Caco-2 (cell line): ENCODE measurements at regions of chr2 and their contacts with region 1.

Region 1: DNA sequence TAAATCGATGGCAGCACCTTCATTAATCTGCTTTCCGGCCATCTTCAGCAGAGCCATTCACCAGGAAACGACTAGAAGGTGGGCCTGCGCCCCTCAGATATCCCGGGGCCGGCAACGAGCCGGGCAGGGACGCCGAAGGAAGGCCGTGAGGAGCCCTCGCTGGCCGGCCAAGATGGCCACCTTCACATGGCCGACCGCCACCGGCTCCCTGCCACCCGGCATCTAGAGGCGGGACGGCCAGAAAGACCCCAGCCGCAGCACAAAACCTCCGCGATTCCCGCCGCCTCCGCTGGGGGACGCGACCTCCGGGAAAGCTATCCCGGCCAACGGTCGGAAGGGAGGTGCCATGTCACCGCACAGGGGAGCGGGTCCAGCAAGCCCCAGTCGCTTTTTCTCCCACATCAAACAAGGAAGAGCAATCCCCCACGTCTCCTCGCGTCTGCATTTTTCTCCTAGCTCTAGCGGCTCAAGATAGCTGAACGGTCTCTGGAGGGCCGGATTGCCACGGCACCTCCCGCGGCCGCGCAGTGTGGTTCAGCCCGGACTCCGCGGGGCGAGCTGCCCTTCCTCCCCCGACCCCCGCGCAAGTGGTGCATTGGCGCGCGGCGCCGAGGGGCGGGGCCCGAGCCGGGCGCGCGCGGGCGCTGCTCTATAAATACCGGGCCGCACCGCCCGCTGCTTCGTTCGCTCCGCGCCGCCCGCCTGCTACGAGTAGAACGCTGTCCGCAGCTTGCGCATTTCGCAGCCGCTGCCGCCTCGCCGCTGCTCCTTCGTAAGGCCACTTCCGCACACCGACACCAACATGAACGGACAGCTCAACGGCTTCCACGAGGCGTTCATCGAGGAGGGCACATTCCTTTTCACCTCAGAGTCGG is at the start of gene MAT2A:
- DNase-seq: peak; percentile 97 to 99
- H3K4me3 ChIP-seq: peak within 1 kb of the TSS; percentile 98
- H3K4me3 Mint-ChIP-seq: peak within 1 kb of the TSS; percentile 97
- H3K27ac Mint-ChIP-seq: peak within 1 kb of the TSS; percentile 99
- H3K4me1 ChIP-seq: peaks cover 6% of the 10 kb centered on the region
- H3K4me1 Mint-ChIP-seq: peaks cover 34% of the 10 kb centered on the region
- H3K27me3 ChIP-seq: no peaks in the 10 kb centered on the region
- H3K27me3 Mint-ChIP-seq: no peaks in the 10 kb centered on the region
- CTCF ChIP-seq: peak; percentile 81 to 85
- total RNA-seq, gene MAT2A: 217 and 250 TPM in 2 replicates

Region 2: DNA sequence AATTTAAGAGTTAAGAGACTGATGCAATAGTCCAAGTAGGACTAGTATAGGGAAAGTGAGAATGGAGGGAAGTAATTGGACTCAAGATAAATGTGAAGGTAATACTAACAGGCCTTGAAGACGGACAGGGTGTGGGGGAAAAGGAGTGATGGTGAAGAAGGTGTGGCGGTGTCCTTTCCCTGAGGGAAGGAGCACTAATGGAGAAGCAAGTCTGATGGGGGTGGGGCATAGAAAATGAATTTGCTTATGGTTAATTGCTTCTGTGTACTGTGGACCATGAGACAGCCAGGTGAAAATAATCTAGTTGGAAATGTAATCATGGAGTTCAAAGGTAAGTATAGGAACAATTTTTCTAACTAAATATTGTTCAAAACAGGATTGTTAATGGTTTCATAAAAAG is 203.8 kb before region 1 on chr2:
- CTCF ChIA-PET with region 1: no interaction called
- POLR2A ChIA-PET with region 1: no interaction called
- intact Hi-C with region 1: no loop called
- DNase-seq: no peak
- H3K4me3 ChIP-seq: no peak overlapping the region
- H3K4me3 Mint-ChIP-seq: no peak overlapping the region
- H3K27ac Mint-ChIP-seq: no peak overlapping the region
- H3K4me1 ChIP-seq: no peaks in the 10 kb centered on the region
- H3K4me1 Mint-ChIP-seq: peaks cover 7% of the 10 kb centered on the region
- H3K27me3 ChIP-seq: no peaks in the 10 kb centered on the region
- H3K27me3 Mint-ChIP-seq: no peaks in the 10 kb centered on the region
- CTCF ChIP-seq: no peak

Region 3: GRCh38 chr2:85354286-85355072 is 184.2 kb before region 1 on chr2 and contains the starts of genes ELMOD3 and RETSAT:
- CTCF ChIA-PET with region 1: interaction called, 3 read pairs
- POLR2A ChIA-PET with region 1: interaction called, 11 read pairs
- intact Hi-C with region 1: loop called (anchors 1 kb)
- DNase-seq: peak; percentile 99 to 100
- H3K4me3 ChIP-seq: peak within 1 kb of the TSS; percentile 49
- H3K4me3 Mint-ChIP-seq: peak within 1 kb of the TSS; percentile 99
- H3K27ac Mint-ChIP-seq: peak within 1 kb of the TSS; percentile 96
- H3K4me1 ChIP-seq: no peaks in the 10 kb centered on the region
- H3K4me1 Mint-ChIP-seq: no peaks in the 10 kb centered on the region
- H3K27me3 ChIP-seq: no peaks in the 10 kb centered on the region
- H3K27me3 Mint-ChIP-seq: no peaks in the 10 kb centered on the region
- CTCF ChIP-seq: no peak
- total RNA-seq, gene ELMOD3: 10.3 and 11.3 TPM in 2 replicates
- total RNA-seq, gene RETSAT: 31.1 and 32.3 TPM in 2 replicates

Region 4: GRCh38 chr2:85485815-85486214 is 52.9 kb before region 1 on chr2:
- CTCF ChIA-PET with region 1: no interaction called
- POLR2A ChIA-PET with region 1: no interaction called
- intact Hi-C with region 1: no loop called
- DNase-seq: no peak
- H3K4me3 ChIP-seq: no peak overlapping the region
- H3K4me3 Mint-ChIP-seq: no peak overlapping the region
- H3K27ac Mint-ChIP-seq: no peak overlapping the region
- H3K4me1 ChIP-seq: no peaks in the 10 kb centered on the region
- H3K4me1 Mint-ChIP-seq: no peaks in the 10 kb centered on the region
- H3K27me3 ChIP-seq: no peaks in the 10 kb centered on the region
- H3K27me3 Mint-ChIP-seq: no peaks in the 10 kb centered on the region
- CTCF ChIP-seq: no peak

Region 5: DNA sequence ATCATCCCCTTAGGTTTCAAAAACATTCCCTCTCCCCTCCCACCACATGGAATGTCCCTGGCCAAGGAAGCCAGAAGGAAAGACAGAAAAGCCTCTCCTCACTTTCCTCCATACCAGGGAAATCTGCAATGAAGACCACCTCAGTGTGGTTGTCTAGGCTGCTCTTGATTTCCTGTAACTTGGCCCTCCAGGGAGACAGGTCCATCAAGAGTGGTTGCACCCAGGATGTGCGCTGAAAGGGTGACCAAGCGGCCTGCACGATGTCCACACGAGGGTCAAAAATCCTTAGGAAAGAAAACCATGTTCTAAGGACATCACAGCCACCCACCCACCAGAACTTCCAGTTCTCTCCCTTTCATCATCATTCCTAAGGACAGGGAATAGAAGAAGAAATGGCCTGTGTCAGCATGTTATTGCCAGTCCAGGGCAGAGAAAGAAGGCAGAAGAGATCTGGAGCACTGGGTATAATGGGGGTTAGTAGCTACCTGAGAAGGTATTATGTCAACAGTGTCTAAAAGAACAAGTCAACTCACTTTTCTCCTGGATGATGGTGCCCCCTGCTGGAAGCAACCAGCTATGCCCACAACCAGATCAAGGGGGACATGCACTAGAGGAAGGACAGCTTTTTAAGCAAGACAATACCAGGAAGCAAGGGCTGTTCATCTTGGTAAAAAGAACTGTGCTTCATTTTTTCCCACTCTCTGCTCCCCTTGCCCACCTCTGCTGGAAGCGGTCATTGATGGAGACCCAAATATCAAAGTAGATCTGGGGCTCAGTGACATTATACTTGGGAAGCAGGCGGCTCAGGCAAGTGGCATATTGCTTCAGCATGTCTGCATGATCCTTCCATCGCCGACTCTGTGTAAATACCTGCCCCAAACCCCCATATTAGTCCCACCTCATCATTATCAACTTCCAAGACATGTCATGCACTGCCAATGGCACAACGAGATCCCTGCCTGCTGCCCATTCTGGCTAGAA is 13.3 kb after region 1 on chr2:
- CTCF ChIA-PET with region 1: interaction called, 32 read pairs
- POLR2A ChIA-PET with region 1: interaction called, 32 read pairs
- intact Hi-C with region 1: no loop called
- DNase-seq: peak; percentile 81 to 89
- H3K4me3 ChIP-seq: no peak overlapping the region
- H3K4me3 Mint-ChIP-seq: no peak overlapping the region
- H3K27ac Mint-ChIP-seq: no peak overlapping the region
- H3K4me1 ChIP-seq: no peaks in the 10 kb centered on the region
- H3K4me1 Mint-ChIP-seq: no peaks in the 10 kb centered on the region
- H3K27me3 ChIP-seq: no peaks in the 10 kb centered on the region
- H3K27me3 Mint-ChIP-seq: no peaks in the 10 kb centered on the region
- CTCF ChIP-seq: peak; percentile 93

Region 6: DNA sequence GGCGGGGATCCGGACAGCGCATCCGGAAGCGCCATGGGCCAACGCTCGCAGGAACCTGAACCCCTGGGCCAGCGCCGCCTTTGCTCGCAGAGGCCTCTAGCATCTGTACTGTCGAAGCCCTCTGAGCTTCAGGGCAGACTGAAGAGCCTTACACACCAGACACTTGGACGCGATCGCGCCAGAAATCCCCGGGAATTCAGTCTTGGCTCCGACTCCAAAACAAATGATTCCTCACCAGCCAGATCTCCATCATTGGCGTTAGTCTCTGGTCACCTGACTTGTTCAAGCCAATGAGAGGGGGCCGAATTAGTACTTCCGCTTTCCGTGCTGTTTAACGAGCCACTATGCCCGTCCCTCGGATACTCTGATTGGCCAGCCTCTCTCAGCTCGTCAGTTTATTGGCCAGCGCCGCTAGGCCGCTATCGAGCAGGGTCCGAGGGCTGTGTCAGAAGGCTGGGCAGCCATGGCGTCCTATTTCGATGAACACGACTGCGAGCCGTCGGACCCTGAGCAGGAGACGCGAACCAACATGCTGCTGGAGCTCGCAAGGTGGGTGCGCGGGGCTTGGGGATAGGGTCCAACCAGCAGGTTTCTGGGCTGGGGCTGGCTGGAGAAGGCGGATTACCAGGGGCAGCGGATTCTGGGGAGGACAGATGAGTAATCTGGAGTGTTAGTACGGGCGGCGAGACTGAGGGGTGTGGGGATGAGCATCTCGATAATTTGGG is 56.7 kb after region 1 on chr2 and contains the start of gene RNF181:
- CTCF ChIA-PET with region 1: interaction called, 6 read pairs
- POLR2A ChIA-PET with region 1: interaction called, 12 read pairs
- intact Hi-C with region 1: no loop called
- DNase-seq: peak; percentile 96 to 98
- H3K4me3 ChIP-seq: peak within 1 kb of the TSS; percentile 92
- H3K4me3 Mint-ChIP-seq: peak within 1 kb of the TSS; percentile 97
- H3K27ac Mint-ChIP-seq: peak within 1 kb of the TSS; percentile 83
- H3K4me1 ChIP-seq: peaks cover 17% of the 10 kb centered on the region
- H3K4me1 Mint-ChIP-seq: peaks cover 20% of the 10 kb centered on the region
- H3K27me3 ChIP-seq: no peaks in the 10 kb centered on the region
- H3K27me3 Mint-ChIP-seq: no peaks in the 10 kb centered on the region
- CTCF ChIP-seq: no peak
- total RNA-seq, gene RNF181: 113 and 123 TPM in 2 replicates

Region 7: GRCh38 chr2:85628658-85629057 is 89.9 kb after region 1 on chr2:
- CTCF ChIA-PET with region 1: no interaction called
- POLR2A ChIA-PET with region 1: interaction called, 10 read pairs
- intact Hi-C with region 1: no loop called
- DNase-seq: no peak
- H3K4me3 ChIP-seq: no peak overlapping the region
- H3K4me3 Mint-ChIP-seq: no peak overlapping the region
- H3K27ac Mint-ChIP-seq: no peak overlapping the region
- H3K4me1 ChIP-seq: no peaks in the 10 kb centered on the region
- H3K4me1 Mint-ChIP-seq: no peaks in the 10 kb centered on the region
- H3K27me3 ChIP-seq: no peaks in the 10 kb centered on the region
- H3K27me3 Mint-ChIP-seq: no peaks in the 10 kb centered on the region
- CTCF ChIP-seq: no peak

Region 8: GRCh38 chr2:85707304-85707703 is 168.6 kb after region 1 on chr2:
- CTCF ChIA-PET with region 1: no interaction called
- POLR2A ChIA-PET with region 1: no interaction called
- intact Hi-C with region 1: no loop called
- DNase-seq: peak; percentile 74 to 84
- H3K4me3 ChIP-seq: no peak overlapping the region
- H3K4me3 Mint-ChIP-seq: peak overlapping the region; percentile 23
- H3K27ac Mint-ChIP-seq: no peak overlapping the region
- H3K4me1 ChIP-seq: no peaks in the 10 kb centered on the region
- H3K4me1 Mint-ChIP-seq: no peaks in the 10 kb centered on the region
- H3K27me3 ChIP-seq: no peaks in the 10 kb centered on the region
- H3K27me3 Mint-ChIP-seq: peaks cover 14% of the 10 kb centered on the region
- CTCF ChIP-seq: peak; percentile 73 to 85

Region 9: GRCh38 chr2:85728883-85729824 is 190.4 kb after region 1 on chr2:
- CTCF ChIA-PET with region 1: no interaction called
- POLR2A ChIA-PET with region 1: no interaction called
- intact Hi-C with region 1: no loop called
- DNase-seq: peak; percentile 78 to 92
- H3K4me3 ChIP-seq: no peak overlapping the region
- H3K4me3 Mint-ChIP-seq: no peak overlapping the region
- H3K27ac Mint-ChIP-seq: no peak overlapping the region
- H3K4me1 ChIP-seq: no peaks in the 10 kb centered on the region
- H3K4me1 Mint-ChIP-seq: no peaks in the 10 kb centered on the region
- H3K27me3 ChIP-seq: no peaks in the 10 kb centered on the region
- H3K27me3 Mint-ChIP-seq: peaks cover 6% of the 10 kb centered on the region
- CTCF ChIP-seq: peak; percentile 97 to 99